ENCODE measurements at regions of chr12 and their contacts with region 1.

Region 1: GRCh38 chr12:10212201-10213131 is at the start of gene GABARAPL1:
- DNase-seq: peak; percentile 98
- ATAC-seq: peak; percentile 96
- total RNA-seq, gene GABARAPL1: 282 TPM

Region 2: GRCh38 chr12:9647825-9648700 is 564.4 kb before region 1 on chr12:
- intact Hi-C with region 1: no loop called
- DNase-seq: peak; percentile 90
- ATAC-seq: peak; percentile 96

Region 3: DNA sequence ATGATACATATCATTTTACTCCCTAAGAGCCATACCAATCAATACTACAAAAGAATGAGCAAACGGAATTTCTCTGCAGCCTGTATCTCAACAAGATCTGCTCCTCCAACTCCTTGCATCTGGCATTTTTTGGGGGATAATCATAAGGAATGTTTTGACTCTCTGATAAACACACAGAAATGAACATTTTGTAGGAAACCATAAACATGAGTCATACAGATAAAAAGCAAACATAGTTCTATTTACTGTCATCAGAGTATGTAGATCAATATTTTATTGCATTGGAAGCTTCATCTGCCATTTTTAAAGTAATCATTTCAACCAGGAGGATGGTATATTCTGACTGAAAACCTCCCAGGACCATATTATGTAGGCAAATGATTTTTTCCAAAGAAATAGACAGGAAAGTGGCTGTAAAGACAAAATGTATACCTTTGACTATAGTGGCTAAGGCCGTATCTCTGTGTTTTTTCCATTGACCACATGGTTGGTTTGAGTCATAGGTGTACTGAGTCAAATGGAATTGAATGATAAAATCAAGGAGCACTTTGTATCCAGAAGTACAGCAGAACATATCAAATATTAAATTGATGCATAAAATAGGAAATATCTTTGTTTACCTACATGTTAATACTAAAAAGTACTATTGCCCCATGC is 419.4 kb before region 1 on chr12:
- intact Hi-C with region 1: no loop called
- DNase-seq: no peak
- ATAC-seq: no peak

Region 4: GRCh38 chr12:10153271-10154144 is 59.0 kb before region 1 on chr12:
- intact Hi-C with region 1: loop called (anchors 10 kb)
- DNase-seq: peak; percentile 87
- ATAC-seq: peak; percentile 93

Region 5: DNA sequence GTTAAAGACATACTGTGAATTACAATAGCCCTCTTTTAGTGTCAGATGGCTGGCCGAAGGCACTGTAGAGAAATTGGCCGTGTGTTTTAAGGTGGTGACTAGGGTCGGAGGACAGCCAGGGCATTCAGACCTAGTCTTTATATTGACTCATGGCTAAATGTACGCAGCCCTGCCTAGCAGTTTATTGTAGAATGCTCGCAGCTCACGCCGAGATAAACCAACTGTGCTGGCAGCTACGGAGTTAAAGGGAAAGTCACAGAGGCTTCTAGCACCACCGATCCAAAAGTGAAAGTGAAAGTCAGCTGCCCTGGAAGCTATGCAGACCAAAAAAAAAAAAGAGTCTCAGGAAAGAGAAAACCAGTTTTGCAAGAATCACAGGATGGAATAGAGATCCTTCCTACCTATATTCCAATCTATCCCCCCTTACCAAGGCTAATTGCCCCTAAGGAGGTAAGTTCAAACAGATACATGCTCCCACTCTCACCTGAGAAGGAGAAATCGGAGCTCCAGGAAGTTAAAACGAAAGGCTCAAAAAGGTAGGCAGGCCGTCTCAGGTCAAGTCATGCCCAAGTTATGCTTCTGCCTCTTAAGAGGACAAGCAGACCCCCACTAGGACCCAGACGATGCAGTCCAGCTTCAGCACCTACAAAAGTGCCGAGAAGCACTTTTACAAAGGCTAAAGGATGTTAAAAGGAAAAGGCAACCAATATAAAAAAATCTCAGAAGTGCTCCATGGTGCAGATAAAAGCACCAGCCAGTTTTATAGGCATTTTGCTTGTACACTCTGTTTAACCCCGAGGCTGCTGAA is 152.6 kb after region 1 on chr12:
- intact Hi-C with region 1: loop called (anchors 10 kb)
- DNase-seq: no peak
- ATAC-seq: peak; percentile 84

Region 6: DNA sequence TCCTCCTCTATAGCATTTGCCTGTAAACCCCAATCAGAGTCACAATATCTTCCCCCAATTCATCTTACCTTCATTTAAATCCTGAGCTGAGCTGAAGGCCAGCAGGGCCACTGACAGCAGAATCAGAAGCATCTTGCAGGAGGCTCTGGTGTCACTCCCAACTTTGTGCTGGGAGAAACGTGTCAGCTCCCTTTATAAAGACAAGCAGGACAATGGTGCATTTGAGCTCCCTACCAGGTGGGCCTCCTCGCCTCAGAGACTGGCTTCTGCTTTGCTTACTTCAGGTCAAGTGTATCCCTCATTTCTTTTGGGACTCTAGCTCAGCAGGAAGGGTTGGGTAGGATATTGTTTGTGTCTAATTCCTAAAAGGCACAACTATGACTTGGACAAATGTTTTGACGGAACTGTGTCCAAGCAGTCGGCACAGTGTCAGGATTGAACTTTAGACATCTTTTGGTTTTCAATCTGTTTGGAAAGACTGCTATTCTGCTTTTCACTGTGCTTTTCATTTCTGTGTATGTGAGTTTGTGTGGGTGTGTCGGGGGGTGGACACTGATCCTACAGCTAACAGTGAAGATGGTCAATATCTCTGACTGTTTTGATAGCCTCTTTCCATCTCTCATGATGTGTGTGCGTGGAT is 671.7 kb after region 1 on chr12 and contains the start of gene PRH1:
- intact Hi-C with region 1: no loop called
- DNase-seq: no peak
- ATAC-seq: no peak
- total RNA-seq, gene PRH1: 4.2 TPM

Region 7: GRCh38 chr12:11171145-11171968 is 958.9 kb after region 1 on chr12 and contains the start of gene SMIM10L1:
- intact Hi-C with region 1: loop called (anchors 5 kb)
- DNase-seq: peak; percentile 95
- ATAC-seq: peak; percentile 100
- total RNA-seq, gene SMIM10L1: 14.6 TPM